A673 (cell line): ENCODE measurements at regions of chr1 and their contacts with region 1.

Region 1: DNA sequence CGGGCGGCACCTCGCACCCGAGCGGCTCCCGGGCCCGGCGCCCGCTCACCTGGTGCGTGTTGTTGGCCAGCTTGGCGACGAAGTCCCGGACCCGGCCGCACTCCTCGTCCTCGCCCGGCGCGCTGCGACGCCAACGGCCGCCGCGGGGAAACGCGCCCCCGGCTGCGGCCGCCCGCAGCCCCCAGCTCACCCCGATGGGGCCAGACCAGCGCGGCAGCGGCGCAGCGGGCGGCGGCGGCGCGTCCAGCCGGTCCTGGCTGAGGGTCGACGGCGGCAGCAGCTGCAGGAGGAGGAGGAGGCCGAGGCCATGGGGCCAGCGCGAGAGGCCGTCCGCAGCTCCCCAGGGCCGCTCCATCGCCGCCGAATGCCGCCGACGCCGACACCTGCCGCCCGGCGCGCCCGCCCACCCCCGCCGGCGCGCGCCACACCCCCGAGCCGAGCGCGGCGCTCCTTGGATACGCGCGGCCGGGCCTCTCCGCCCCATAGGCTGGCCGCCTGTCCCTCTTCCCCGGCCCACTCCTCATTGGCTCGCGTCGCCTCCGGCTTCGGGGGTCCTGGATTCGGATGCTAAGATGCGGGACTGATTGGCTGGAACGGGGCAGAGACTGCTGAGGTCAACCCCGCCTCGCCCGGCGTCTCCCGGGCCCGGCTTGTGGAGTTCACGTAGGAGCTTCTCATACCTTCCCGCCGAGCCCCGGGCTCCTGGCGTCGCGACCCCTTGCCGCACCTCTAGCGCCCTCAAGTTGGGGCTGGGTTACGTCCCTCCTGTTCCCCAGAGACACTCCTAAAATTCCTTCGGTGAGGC is at the start of gene SORT1:
- DNase-seq: peak; percentile 97
- H3K4me3 ChIP-seq: peak within 1 kb of the TSS; percentile 60
- H3K27ac ChIP-seq: peak within 1 kb of the TSS; percentile 36
- H3K4me1 ChIP-seq: peaks cover 31% of the 10 kb centered on the region
- H3K27me3 ChIP-seq: no peaks in the 10 kb centered on the region
- CTCF ChIP-seq: no peak
- total RNA-seq, gene SORT1: 52.4 and 56.5 TPM in 2 replicates

Region 2: GRCh38 chr1:108627256-108627655 is 770.5 kb before region 1 on chr1:
- CTCF ChIA-PET with region 1: no interaction called
- POLR2A ChIA-PET with region 1: no interaction called
- intact Hi-C with region 1: no loop called
- DNase-seq: no peak
- H3K4me3 ChIP-seq: no peak overlapping the region
- H3K27ac ChIP-seq: no peak overlapping the region
- H3K4me1 ChIP-seq: no peaks in the 10 kb centered on the region
- H3K27me3 ChIP-seq: no peaks in the 10 kb centered on the region
- CTCF ChIP-seq: no peak

Region 3: DNA sequence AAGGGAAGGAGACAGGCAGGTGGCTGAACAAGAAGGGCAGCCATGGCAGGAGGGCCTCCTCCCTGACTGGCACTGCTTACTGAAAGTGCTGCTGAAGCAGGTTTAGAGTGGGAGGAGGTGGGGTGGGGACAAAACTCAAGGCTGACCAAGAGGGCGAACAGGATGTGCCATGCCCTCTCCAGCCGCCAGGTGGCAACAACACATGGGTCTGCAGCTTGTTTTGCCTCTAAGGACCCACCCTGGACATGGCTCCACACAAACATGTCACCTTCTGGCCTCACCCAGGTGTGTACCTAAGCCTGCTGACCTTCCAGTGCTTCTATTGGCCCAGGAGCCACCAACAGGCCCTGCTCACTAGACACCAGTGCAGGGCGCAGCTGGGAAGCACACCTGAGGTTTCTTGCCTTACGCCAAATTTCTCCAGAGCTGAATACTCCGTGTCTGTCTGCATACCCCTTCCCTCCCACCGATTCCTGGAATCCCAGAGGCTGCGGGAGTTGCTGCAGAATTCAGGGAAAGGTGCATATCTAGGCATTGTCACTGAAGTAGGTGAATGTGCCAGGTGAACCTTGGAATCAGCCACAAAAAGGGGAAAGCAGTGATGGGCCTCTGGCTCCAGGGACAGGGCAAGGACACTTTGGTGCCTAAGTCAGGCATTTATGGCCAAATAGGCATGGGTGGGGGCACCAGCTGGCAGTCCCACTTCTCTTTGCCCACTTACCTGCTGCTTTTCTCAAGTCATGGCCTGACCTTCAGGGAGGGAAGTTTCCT is 120.1 kb before region 1 on chr1:
- CTCF ChIA-PET with region 1: interaction called, 23 read pairs
- POLR2A ChIA-PET with region 1: no interaction called
- intact Hi-C with region 1: loop called (anchors 1 kb)
- DNase-seq: peak; percentile 71
- H3K4me3 ChIP-seq: no peak overlapping the region
- H3K27ac ChIP-seq: no peak overlapping the region
- H3K4me1 ChIP-seq: peaks cover 10% of the 10 kb centered on the region
- H3K27me3 ChIP-seq: no peaks in the 10 kb centered on the region
- CTCF ChIP-seq: peak; percentile 96

Region 4: GRCh38 chr1:109282952-109283747 is 114.6 kb before region 1 on chr1 and contains the start of gene PSRC1:
- CTCF ChIA-PET with region 1: interaction called, 5 read pairs
- POLR2A ChIA-PET with region 1: no interaction called
- intact Hi-C with region 1: loop called (anchors 2 kb)
- DNase-seq: peak; percentile 98
- H3K4me3 ChIP-seq: peak within 1 kb of the TSS; percentile 88
- H3K27ac ChIP-seq: peak within 1 kb of the TSS; percentile 82
- H3K4me1 ChIP-seq: peaks cover 28% of the 10 kb centered on the region
- H3K27me3 ChIP-seq: no peaks in the 10 kb centered on the region
- CTCF ChIP-seq: peak; percentile 56
- total RNA-seq, gene PSRC1: 75.0 and 85.2 TPM in 2 replicates